Activated CD8-positive, alpha-beta T cell treated with anti-CD3 and anti-CD28 coated beads, Interleukin-2, amount 10 ng/mL, durations not matched to agents 7 days and 5 days (primary cell): ENCODE measurements at regions of chr9 and their contacts with region 1.

Region 1: DNA sequence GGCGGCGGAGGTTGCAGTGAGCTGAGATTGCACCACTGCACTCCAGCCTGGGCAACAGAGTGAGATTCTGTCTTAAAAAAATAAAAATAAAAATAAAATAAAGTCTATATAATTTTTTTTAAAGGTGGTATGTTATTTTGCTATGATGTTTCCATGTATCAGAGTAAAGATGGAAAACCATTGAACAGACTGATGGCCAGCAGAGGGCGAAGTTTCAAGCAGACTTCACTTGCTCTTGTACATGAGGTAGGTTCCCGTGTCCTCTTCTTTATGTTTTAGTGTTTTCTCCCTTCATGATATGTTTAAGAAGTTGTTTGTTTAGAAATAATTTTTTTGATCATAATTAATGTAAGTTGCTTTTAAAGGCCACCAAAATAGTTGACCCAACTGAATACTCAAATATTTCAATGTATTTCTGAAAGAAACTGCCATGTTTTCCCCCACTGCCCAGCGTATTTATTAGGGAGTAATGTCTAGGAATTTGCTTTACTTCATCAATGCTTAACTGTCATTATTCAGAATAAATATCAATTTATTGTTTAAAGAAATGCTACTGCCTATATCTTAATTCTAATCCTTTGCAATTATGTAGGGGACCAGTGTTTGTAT is 146.4 kb downstream of the HACD4 start:
- DNase-seq: peak; percentile 75
- ATAC-seq: peak; percentile 47
- H3K4me3 Mint-ChIP-seq: no peak overlapping the region
- H3K27ac Mint-ChIP-seq: no peak overlapping the region
- H3K4me1 Mint-ChIP-seq: no peaks in the 10 kb centered on the region
- H3K27me3 Mint-ChIP-seq: no peaks in the 10 kb centered on the region

Region 2: DNA sequence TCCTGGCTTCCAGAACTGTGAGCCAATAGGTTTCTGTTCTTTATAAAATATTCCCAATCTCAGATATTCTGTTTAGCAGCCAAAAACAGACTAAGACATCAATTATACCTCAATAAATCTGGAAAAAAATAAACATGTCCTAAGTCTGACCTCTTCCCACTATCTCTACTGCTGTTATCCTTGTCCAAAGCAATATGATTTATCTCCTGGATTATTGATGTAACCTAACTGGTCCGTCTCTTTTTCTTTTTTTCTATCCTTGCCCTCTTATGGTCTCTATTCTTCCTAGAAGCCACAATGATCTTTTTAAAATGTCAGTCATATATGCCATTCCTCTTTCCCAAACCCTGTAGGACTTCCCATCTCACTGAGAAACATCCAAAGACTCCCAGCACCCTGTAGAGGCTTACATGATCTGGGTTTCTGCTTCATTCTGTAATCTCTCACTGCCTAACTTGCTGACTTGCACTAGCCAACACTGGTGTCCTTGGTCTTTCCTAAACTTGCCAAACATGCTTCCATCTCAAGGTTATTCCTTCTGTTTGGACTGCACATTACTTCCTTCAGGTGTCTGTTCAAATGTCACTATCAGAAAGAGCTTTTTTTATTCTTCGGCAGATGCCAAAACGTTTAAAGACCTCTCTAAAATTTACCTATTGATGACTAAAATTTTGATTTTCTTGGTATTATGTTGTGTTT is 187.9 kb before region 1 on chr9:
- CTCF ChIA-PET with region 1: no interaction called
- POLR2A ChIA-PET with region 1: no interaction called
- DNase-seq: no peak
- ATAC-seq: no peak
- H3K4me3 Mint-ChIP-seq: no peak overlapping the region
- H3K27ac Mint-ChIP-seq: no peak overlapping the region
- H3K4me1 Mint-ChIP-seq: peaks cover 11% of the 10 kb centered on the region
- H3K27me3 Mint-ChIP-seq: no peaks in the 10 kb centered on the region

Region 3: GRCh38 chr9:20781092-20781491 is 104.0 kb before region 1 on chr9:
- CTCF ChIA-PET with region 1: no interaction called
- POLR2A ChIA-PET with region 1: no interaction called
- DNase-seq: no peak
- ATAC-seq: no peak
- H3K4me3 Mint-ChIP-seq: no peak overlapping the region
- H3K27ac Mint-ChIP-seq: no peak overlapping the region
- H3K4me1 Mint-ChIP-seq: no peaks in the 10 kb centered on the region
- H3K27me3 Mint-ChIP-seq: no peaks in the 10 kb centered on the region

Region 4: DNA sequence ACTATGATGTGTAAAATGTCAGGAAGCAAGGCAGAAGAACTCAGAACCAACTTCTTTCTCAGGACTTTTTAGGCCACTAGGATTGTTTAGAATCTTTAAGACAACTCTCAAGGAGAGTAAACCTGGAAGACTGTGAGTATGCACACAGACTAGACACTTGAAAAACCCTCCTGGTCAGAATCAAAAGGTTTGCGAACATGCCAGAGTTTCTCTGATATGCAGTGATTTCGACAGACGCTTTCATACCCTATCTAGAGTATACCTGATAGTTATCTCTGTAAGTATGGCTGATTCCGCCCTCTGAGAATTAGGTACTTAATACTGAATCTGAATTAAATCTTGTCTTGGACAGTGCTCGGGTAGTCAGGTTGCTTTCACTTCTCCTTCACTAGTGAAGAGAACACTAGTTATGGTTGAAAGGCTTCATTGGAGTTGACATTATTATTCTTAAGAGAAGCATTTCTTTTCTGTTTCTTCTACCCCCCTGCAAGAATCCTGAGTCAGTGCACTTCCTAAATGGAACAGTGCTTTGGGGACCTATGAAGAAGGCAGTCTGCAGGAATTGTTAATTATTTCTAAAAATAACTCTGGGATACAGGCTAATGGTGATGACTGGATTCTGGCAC is 11.7 kb before region 1 on chr9:
- CTCF ChIA-PET with region 1: interaction called, 21 read pairs
- POLR2A ChIA-PET with region 1: no interaction called
- DNase-seq: no peak
- ATAC-seq: no peak
- H3K4me3 Mint-ChIP-seq: no peak overlapping the region
- H3K27ac Mint-ChIP-seq: no peak overlapping the region
- H3K4me1 Mint-ChIP-seq: peaks cover 15% of the 10 kb centered on the region
- H3K27me3 Mint-ChIP-seq: no peaks in the 10 kb centered on the region

Region 5: DNA sequence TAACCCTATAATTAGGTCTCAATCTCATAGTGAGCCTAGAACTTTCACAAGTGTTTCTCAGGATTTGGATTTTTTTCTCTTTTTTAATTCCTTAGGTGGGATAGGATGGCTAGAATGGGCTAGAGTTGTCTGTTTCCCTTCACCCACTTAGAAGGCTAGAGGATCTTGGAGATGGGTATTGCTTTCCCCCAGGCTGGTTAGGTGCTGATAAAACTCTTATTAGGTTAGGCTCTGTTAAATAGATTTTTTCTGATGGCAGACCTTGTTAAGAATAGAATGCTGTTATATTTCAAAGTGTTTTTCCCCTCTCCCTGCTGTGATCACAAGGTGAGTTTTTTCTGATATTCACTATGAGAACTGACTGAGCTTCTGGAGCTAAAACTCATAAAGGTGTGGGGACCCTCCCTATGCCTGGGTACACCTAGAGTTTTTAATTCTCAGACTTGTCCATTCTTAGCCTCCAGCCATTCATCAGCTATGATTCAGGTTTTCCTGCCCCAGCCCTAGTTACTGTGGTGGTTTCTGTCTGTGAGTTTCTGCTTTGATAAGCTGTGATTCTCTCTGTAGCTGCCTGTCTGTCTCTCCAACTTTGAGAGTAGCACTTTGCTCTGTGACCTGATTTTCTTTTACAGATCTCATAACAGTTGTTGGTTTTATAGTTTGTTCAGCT is 13.9 kb after region 1 on chr9:
- CTCF ChIA-PET with region 1: interaction called, 15 read pairs
- POLR2A ChIA-PET with region 1: no interaction called
- DNase-seq: no peak
- ATAC-seq: no peak
- H3K4me3 Mint-ChIP-seq: no peak overlapping the region
- H3K27ac Mint-ChIP-seq: no peak overlapping the region
- H3K4me1 Mint-ChIP-seq: no peaks in the 10 kb centered on the region
- H3K27me3 Mint-ChIP-seq: no peaks in the 10 kb centered on the region

Region 6: GRCh38 chr9:21110708-21111576 is 225.9 kb after region 1 on chr9:
- CTCF ChIA-PET with region 1: interaction called, 51 read pairs
- POLR2A ChIA-PET with region 1: no interaction called
- DNase-seq: peak; percentile 42
- ATAC-seq: peak; percentile 87
- H3K4me3 Mint-ChIP-seq: no peak overlapping the region
- H3K27ac Mint-ChIP-seq: no peak overlapping the region
- H3K4me1 Mint-ChIP-seq: no peaks in the 10 kb centered on the region
- H3K27me3 Mint-ChIP-seq: peaks cover 19% of the 10 kb centered on the region